Right ventricle myocardium inferior (tissue), 1 donor: ENCODE measurements at regions of chr7 and their contacts with region 1.

Region 1: DNA sequence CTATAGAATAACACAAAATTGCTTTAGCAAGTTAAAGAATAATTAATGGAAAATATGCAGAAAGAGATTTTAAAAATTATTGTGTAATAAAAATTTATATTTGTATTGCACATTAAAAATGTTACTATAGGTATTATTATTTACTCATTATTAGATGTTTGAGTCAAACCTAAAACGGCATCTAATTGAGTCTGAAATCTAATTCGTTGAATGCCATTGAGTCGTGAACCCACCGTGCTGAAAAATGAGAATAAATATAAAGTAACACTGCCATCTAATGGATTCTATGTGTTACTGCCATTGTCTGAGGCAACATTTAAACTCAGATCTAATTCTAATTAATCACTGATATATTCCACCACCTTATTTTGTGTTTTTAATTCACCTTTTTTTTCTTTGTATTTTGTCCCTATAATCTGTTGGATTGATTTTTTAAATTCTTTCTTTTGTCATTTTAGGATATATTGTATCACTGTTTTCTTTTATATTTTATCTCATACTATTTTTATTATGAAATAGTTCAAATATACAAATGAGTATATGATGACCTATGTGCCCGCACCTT is 62.2 kb downstream of the SAMD9 start:
- DNase-seq: no peak
- ATAC-seq: no peak

Region 2: DNA sequence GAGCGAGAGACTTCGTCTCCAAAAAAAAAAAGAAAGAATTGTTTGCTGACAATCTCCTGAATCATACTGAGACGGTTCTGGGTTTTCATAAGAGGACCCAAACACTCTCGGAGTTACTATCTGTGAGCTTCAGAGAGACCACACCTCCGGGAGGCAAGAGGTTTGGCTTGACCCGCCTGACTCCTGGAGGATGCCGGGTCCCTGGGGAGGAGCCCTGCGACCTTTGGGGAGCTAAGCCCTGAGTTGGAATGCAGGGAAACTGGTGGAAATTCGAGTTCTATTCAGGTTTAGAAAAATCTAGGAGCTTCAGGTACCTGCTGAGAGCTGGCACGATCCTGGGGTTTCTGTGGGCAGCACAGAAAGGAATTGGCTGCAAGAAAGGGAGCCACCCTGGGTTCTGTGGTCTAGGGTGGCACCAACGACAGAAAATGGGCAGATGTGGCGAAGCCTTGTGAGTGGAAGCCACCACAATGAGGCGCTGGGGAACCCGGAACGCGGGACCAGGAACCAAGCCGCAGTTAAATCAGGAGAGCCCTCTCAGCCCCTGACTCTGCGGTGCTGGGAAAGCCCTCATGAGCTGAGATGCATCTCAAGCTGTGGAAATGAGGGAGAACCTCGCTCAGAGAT is 630.2 kb before region 1 on chr7:
- intact Hi-C with region 1: loop called (anchors 2 kb)
- DNase-seq: no peak
- ATAC-seq: no peak

Region 3: DNA sequence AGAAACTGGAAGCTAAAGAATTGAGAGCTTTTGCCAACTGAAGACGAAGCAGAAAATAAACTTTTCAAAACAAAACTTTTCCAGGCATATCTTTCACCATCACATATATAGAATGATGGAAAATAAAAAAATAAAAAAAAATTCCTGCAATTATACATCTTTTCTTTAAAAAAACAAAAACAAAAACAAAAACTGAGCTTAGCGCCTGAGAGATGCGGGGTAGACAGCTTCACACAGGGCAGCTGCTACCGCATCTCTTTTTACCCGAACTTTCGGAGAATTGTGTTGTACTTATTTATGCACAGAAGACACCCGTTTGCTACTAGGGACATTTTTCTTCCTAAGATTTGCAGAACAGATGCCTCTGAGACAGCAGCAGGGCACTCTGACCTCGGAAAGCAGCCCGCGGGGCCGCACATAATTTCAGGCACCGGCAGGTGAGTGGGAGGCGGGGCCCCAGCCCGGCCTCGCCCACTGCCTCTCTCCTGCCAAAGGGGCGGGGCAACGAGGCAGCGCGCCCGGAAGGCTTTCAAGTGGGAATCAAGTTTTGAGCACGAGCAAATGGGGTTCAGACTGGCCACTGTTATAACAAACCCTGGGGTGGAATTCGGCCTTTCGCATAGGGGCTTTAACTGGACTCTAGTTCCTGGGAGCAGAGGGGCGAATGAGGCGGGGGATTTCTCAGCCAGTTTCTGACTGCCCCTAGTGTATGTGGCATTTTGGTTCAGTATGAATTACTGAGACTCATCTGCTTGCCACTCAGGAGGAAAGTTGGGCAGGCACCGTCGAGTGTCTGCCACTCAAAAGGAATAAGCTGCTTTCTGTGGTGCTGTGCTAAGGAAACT is 447.0 kb before region 1 on chr7:
- intact Hi-C with region 1: no loop called
- DNase-seq: no peak
- ATAC-seq: peak; percentile 47

Region 4: GRCh38 chr7:92880212-92881090 is 175.2 kb before region 1 on chr7:
- intact Hi-C with region 1: loop called (anchors 10 kb)
- DNase-seq: no peak
- ATAC-seq: peak; percentile 34

Region 5: DNA sequence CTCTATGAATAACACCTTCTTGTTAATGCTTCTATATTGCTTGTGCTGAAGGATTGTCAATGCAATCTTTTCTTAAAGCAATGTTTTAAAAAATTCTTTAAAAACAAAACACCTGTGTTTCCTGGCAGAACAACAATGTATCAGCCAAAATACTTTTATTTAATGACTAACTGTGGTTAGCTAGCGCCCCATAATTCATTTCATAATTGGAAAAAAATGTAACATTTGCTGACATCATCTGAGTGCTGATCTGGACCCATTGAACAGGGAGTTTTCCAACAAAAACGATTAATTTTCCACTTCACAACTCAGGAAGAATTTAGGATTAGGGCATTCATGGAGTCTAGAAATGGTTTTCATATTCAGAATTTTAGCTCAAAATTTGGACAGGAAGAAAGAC is 81.7 kb before region 1 on chr7:
- intact Hi-C with region 1: no loop called
- DNase-seq: no peak
- ATAC-seq: no peak

Region 6: GRCh38 chr7:93006480-93007095 is 49.0 kb before region 1 on chr7:
- intact Hi-C with region 1: no loop called
- DNase-seq: no peak
- ATAC-seq: no peak

Region 7: GRCh38 chr7:93016681-93017381 is 38.8 kb before region 1 on chr7:
- intact Hi-C with region 1: no loop called
- DNase-seq: no peak
- ATAC-seq: no peak